ENCODE measurements at regions of chr3 and their contacts with region 1.

Region 1: GRCh38 chr3:187714404-187714979 is 12.1 kb upstream of the RTP2 start:
- DNase-seq: peak; percentile 80
- H3K4me3 ChIP-seq: no peak overlapping the region
- H3K27ac ChIP-seq: no peak overlapping the region
- H3K4me1 ChIP-seq: peaks cover 0 to 10% (median 3%) of the 10 kb centered on the region in 4 donors
- H3K27me3 ChIP-seq: no peaks in the 10 kb centered on the region
- CTCF ChIP-seq: peak; percentile 86 to 93 (median 92)
- EP300 ChIP-seq: no peak
- POLR2A ChIP-seq: no peak

Region 2: DNA sequence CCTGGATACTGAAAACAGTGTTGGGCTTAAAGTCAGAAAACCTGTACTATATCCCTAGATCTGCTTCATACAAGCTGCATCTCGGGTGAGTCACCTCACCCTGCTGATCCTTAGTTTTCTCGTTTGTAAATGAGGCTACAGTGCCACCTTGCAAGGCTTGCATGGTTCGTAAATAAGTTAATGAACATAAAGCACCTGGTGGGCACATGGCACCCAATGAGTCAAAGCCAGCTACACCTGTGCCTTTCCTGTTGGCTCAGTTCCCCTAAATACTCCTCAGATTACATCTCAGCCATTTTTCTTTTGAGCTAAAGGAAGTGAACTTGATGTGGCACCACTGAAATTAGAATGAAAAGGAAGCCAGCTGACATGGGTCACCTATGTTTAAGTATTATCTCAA is 490.7 kb before region 1 on chr3:
- intact Hi-C with region 1: loop called (anchors 5 kb)
- DNase-seq: no peak
- H3K4me3 ChIP-seq: no peak overlapping the region
- H3K27ac ChIP-seq: no peak overlapping the region
- H3K4me1 ChIP-seq: peaks cover 0 to 28% (median 12%) of the 10 kb centered on the region in 4 donors
- H3K27me3 ChIP-seq: no peaks in the 10 kb centered on the region
- CTCF ChIP-seq: no peak
- EP300 ChIP-seq: no peak
- POLR2A ChIP-seq: no peak

Region 3: GRCh38 chr3:187319699-187320302 is 394.7 kb before region 1 on chr3:
- intact Hi-C with region 1: loop called (anchors 1 kb)
- DNase-seq: peak; percentile 81
- H3K4me3 ChIP-seq: no peak overlapping the region
- H3K27ac ChIP-seq: no peak overlapping the region
- H3K4me1 ChIP-seq: peaks cover 0 to 15% (median 10%) of the 10 kb centered on the region in 4 donors
- H3K27me3 ChIP-seq: no peaks in the 10 kb centered on the region
- CTCF ChIP-seq: peak; percentile 70 to 98 (median 90)
- EP300 ChIP-seq: no peak
- POLR2A ChIP-seq: no peak

Region 4: DNA sequence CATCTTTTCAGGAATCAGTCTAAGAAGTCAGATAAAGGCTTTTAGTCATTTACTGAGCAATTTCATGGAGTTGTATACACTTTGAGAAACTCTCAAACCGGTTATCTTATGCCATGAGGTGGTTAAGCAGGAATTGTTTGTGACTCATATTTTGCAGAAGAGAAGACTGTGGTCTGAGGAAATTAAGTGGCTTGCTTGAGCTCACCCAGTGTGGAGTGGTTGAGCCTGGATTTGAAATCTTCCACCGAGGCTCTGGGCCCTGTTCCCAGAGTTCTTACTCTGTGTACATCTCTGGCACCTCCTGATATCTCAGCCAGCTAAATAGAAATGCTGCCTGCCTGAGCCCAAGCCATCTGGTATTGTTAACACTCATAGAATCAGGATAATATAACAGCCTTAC is 68.6 kb after region 1 on chr3:
- intact Hi-C with region 1: no loop called
- DNase-seq: peak; percentile 81
- H3K4me3 ChIP-seq: no peak overlapping the region
- H3K27ac ChIP-seq: peak overlapping the region in 3 of 4 donors; percentile 28 to 62 (median 61)
- H3K4me1 ChIP-seq: peaks cover 0 to 13% (median 6%) of the 10 kb centered on the region in 4 donors
- H3K27me3 ChIP-seq: no peaks in the 10 kb centered on the region
- CTCF ChIP-seq: no peak
- EP300 ChIP-seq: no peak
- POLR2A ChIP-seq: no peak